Panc1 (cell line): ENCODE measurements at regions of chr15 and their contacts with region 1.

Region 1: DNA sequence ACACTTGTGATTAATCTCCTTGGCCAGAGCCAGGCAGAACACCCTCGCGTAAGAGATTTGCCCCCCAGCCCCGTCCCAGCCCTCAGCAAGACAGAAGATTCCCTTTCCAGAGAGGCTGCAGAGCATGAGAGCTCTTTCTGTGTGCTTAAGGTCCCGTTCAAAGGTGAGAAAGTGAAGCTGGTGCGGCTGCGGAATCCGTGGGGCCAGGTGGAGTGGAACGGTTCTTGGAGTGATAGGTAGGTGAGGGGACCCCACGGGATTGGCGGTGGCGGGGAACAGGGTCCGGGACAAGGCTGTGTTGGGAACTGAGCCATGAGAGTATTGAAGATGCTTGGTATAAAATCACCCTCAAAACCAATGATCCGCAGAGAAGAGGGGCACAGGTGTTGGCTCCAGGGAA is 34.8 kb downstream of the CAPN3 start:
- DNase-seq: no peak
- ATAC-seq: no peak
- H3K4me3 ChIP-seq: no peak overlapping the region
- H3K27ac ChIP-seq: no peak overlapping the region
- H3K4me1 ChIP-seq: no peaks in the 10 kb centered on the region
- H3K27me3 ChIP-seq: no peaks in the 10 kb centered on the region
- CTCF ChIP-seq: no peak

Region 2: GRCh38 chr15:42427429-42428223 is 33.5 kb after region 1 on chr15:
- CTCF ChIA-PET with region 1: no interaction called
- POLR2A ChIA-PET with region 1: interaction called, 10 read pairs
- in situ Hi-C with region 1: no loop called
- intact Hi-C with region 1: no loop called
- DNase-seq: no peak
- ATAC-seq: no peak
- H3K4me3 ChIP-seq: no peak overlapping the region
- H3K27ac ChIP-seq: no peak overlapping the region
- H3K4me1 ChIP-seq: no peaks in the 10 kb centered on the region
- H3K27me3 ChIP-seq: no peaks in the 10 kb centered on the region
- CTCF ChIP-seq: no peak

Region 3: GRCh38 chr15:42608752-42609488 is 214.8 kb after region 1 on chr15:
- CTCF ChIA-PET with region 1: no interaction called
- POLR2A ChIA-PET with region 1: no interaction called
- in situ Hi-C with region 1: no loop called
- intact Hi-C with region 1: no loop called
- DNase-seq: no peak
- ATAC-seq: no peak
- H3K4me3 ChIP-seq: no peak overlapping the region
- H3K27ac ChIP-seq: no peak overlapping the region
- H3K4me1 ChIP-seq: no peaks in the 10 kb centered on the region
- H3K27me3 ChIP-seq: no peaks in the 10 kb centered on the region
- CTCF ChIP-seq: no peak

Region 4: GRCh38 chr15:44075535-44075934 is 1681.4 kb after region 1 on chr15:
- CTCF ChIA-PET with region 1: no interaction called
- POLR2A ChIA-PET with region 1: no interaction called
- in situ Hi-C with region 1: no loop called
- intact Hi-C with region 1: no loop called
- DNase-seq: no peak
- ATAC-seq: no peak
- H3K4me3 ChIP-seq: no peak overlapping the region
- H3K27ac ChIP-seq: no peak overlapping the region
- H3K4me1 ChIP-seq: no peaks in the 10 kb centered on the region
- H3K27me3 ChIP-seq: no peaks in the 10 kb centered on the region
- CTCF ChIP-seq: no peak